Dendritic cell treated with granulocyte-macrophage colony-stimulating factor and Interleukin-4, amounts not matched to agents 40 ng/mL and 50 ng/mL, for 4 days (primary cell): ENCODE measurements at regions of chr10 and their contacts with region 1.

Region 1: DNA sequence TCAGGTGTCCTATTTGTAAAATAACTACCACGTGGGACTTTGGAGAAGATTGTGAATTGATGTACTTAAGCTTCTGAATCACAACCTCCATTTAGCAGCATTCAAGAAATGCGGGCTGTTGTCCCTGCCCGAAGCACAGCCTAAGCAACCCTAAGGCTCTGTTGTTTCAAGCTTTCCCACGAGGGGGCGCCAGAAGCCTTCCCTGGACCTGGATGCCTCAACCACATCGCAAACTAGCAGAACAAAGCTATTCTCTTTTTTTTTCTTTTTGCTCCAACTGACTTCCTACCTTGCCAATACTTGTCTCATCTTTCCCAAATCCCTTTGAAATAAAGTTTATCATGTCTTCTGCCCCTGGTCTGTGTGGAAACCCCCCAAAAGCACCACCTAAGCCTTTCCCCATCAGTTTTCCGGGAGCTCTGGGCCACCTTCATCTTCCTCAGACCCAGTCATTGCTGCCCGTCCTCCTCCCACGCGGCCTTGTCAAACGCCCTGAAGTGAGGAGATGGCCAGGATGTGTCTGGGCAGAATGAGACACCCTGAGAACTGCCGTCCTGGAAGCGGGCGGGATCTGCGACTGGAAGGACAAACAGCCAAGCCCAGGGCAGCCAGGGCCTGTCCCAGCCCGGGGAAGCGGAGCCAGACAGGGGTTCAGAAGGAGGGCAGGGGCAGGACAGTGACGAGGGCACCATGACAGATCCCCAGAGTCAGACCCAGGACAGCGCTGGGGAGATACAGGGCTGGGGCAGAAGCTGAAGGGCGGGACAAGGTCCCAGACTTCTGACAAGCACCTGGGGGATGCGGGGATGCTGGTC is 112.7 kb downstream of the SLIT1 start:
- H3K4me3 Mint-ChIP-seq: no peak overlapping the region
- H3K27ac Mint-ChIP-seq: no peak overlapping the region
- H3K4me1 Mint-ChIP-seq: peaks cover 6% of the 10 kb centered on the region
- H3K27me3 Mint-ChIP-seq: peaks cover 30% of the 10 kb centered on the region

Region 2: GRCh38 chr10:96960872-96961271 is 112.2 kb before region 1 on chr10:
- intact Hi-C with region 1: no loop called
- H3K4me3 Mint-ChIP-seq: no peak overlapping the region
- H3K27ac Mint-ChIP-seq: no peak overlapping the region
- H3K4me1 Mint-ChIP-seq: no peaks in the 10 kb centered on the region
- H3K27me3 Mint-ChIP-seq: no peaks in the 10 kb centered on the region

Region 3: DNA sequence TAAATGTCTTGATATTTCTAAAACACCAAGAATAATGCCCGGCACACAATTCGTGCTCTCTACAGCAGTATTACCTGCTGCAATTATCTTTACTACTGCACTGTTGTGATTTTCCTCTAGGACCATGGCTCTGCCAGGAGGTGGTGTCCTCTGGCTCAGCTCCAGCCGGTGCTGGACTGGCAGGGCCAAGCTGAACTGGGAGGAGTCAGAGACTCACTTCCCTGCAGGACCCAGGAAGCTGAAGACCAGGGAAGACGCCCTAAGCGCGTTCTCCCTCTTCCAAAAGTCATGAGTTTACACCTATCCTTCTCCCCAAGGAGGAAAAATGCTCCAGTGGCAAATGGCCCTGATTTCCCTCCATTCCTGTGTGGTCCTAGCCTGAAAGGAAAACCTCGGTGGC is 97.3 kb after region 1 on chr10:
- intact Hi-C with region 1: no loop called
- H3K4me3 Mint-ChIP-seq: no peak overlapping the region
- H3K27ac Mint-ChIP-seq: no peak overlapping the region
- H3K4me1 Mint-ChIP-seq: no peaks in the 10 kb centered on the region
- H3K27me3 Mint-ChIP-seq: peaks cover 19% of the 10 kb centered on the region

Region 4: GRCh38 chr10:97210543-97210961 is 137.5 kb after region 1 on chr10:
- intact Hi-C with region 1: loop called (anchors 1 kb)
- H3K4me3 Mint-ChIP-seq: no peak overlapping the region
- H3K27ac Mint-ChIP-seq: no peak overlapping the region
- H3K4me1 Mint-ChIP-seq: no peaks in the 10 kb centered on the region
- H3K27me3 Mint-ChIP-seq: no peaks in the 10 kb centered on the region

Region 5: GRCh38 chr10:97234400-97234799 is 161.3 kb after region 1 on chr10:
- intact Hi-C with region 1: loop called (anchors 2 kb)
- H3K4me3 Mint-ChIP-seq: no peak overlapping the region
- H3K27ac Mint-ChIP-seq: no peak overlapping the region
- H3K4me1 Mint-ChIP-seq: peaks cover 8% of the 10 kb centered on the region
- H3K27me3 Mint-ChIP-seq: no peaks in the 10 kb centered on the region